H1 (cell line): ENCODE measurements at regions of chr15 and their contacts with region 1.

Region 1: GRCh38 chr15:98556321-98556720 is 92.0 kb upstream of the IGF1R start:
- DNase-seq: no peak
- H3K4me3 ChIP-seq: no peak overlapping the region
- H3K27ac ChIP-seq: no peak overlapping the region; the same call in 1 of the 2 replicates
- H3K4me1 ChIP-seq: peaks cover 0 to 12% (median 9%) of the 10 kb centered on the region in 4 experiments; a peak in 6 of 7 replicates
- H3K27me3 ChIP-seq: no peaks in the 10 kb centered on the region; a peak in 1 of 7 replicates
- CTCF ChIP-seq: no peak
- EP300 ChIP-seq: no peak
- POLR2A ChIP-seq: no peak
- RAD21 ChIP-seq: no peak

Region 2: DNA sequence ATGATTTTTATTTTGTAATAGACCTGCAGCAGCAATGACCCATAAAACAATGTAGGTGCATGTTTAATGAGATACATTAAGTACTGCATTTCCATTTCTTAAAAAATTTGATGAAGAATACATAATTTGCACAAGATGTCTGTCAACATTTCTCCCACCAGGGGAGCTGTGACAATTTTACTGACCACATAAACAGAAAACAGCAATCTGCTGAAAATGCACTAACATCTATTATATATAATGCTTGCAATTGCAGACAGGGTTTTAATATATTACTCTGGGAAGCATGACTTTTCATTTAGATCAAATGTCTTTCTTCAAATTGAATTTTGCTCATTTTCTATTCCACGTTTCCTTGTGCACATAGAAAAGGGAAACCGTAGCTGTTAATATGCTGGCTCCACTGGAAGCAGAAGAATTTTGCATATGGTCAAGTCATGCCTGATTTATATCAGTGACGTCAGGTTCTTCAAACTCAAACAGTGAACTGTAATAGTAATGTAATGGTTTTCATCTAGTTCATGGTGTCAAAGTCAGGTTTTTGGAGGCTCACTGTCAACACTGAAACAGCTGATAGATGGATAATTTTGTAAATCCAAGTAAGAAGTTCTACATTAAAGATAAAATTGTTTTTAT is 12.2 kb after region 1 on chr15:
- CTCF ChIA-PET with region 1: interaction called, 18 read pairs
- POLR2A ChIA-PET with region 1: no interaction called
- DNase-seq: no peak
- H3K4me3 ChIP-seq: no peak overlapping the region
- H3K27ac ChIP-seq: no peak overlapping the region
- H3K4me1 ChIP-seq: no peaks in the 10 kb centered on the region
- H3K27me3 ChIP-seq: no peaks in the 10 kb centered on the region
- CTCF ChIP-seq: peak in 1 of 3 experiments; percentile 17; a peak in 1 of 4 replicates
- EP300 ChIP-seq: no peak
- POLR2A ChIP-seq: no peak
- RAD21 ChIP-seq: no peak